ENCODE measurements at regions of chr3 and their contacts with region 1.

Region 1: DNA sequence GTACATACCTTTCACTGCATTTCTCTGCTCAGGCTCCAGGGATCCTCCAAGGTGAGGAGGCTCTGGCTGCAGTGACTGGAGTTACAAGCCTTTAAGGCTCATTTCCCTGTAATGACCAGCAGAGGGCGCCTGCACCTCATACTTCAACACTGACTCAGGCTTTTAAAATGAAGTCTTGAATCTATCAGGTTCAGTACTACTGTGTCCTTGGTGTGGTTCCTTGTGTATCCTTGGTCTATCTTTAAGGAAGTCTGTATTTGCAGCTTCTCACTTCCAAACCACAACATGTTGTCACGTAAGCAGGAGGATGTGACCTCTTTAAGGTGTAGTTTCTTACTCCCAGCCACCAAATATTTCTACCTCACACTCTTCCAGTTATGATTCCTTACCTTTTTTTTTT is 122.5 kb upstream of the ZBED2 start:
- DNase-seq: peak; percentile 84
- ATAC-seq: peak; percentile 94
- H3K4me3 Mint-ChIP-seq: no peak overlapping the region
- H3K27ac Mint-ChIP-seq: no peak overlapping the region
- H3K4me1 Mint-ChIP-seq: no peaks in the 10 kb centered on the region
- H3K27me3 Mint-ChIP-seq: no peaks in the 10 kb centered on the region
- CTCF ChIP-seq: peak; percentile 85

Region 2: GRCh38 chr3:111285694-111286093 is 431.9 kb before region 1 on chr3:
- CTCF ChIA-PET with region 1: no interaction called
- POLR2A ChIA-PET with region 1: no interaction called
- intact Hi-C with region 1: no loop called
- DNase-seq: no peak
- ATAC-seq: no peak
- H3K4me3 Mint-ChIP-seq: no peak overlapping the region
- H3K27ac Mint-ChIP-seq: no peak overlapping the region
- H3K4me1 Mint-ChIP-seq: peaks cover 16% of the 10 kb centered on the region
- H3K27me3 Mint-ChIP-seq: no peaks in the 10 kb centered on the region
- CTCF ChIP-seq: no peak

Region 3: GRCh38 chr3:111668912-111669488 is 48.6 kb before region 1 on chr3:
- CTCF ChIA-PET with region 1: interaction called, 4 read pairs
- POLR2A ChIA-PET with region 1: no interaction called
- intact Hi-C with region 1: loop called (anchors 5 kb)
- DNase-seq: no peak
- ATAC-seq: peak; percentile 50
- H3K4me3 Mint-ChIP-seq: no peak overlapping the region
- H3K27ac Mint-ChIP-seq: peak overlapping the region; percentile 68
- H3K4me1 Mint-ChIP-seq: peaks cover 84% of the 10 kb centered on the region
- H3K27me3 Mint-ChIP-seq: no peaks in the 10 kb centered on the region
- CTCF ChIP-seq: peak; percentile 84

Region 4: DNA sequence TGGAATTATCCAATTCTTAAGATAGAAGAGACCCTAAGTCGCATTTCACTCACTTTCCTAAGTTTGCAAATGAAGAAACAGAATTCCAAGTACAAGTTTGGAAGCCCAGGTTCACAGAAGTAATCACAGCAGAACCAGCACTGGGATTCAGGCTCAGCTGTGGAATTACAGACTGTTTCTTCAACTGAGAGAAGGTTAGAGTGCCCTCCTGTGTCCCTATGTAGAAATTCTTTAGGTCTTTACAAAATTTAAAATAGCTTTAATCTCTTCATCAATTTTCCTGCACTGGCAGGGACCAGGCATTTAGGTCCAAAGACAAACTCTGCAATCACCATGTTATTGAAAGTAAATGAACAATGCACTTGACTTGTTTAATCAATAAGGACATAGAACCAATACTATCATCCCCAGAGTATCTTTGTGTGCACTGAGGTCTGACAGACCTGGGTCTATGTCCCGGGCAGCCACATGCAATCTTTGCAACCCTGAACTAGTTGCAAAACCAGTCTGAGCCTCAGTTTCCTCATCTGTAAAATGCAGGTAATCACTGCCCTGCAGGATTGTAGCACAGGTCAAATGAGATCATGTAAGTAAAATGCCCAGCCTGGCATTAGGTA is 26.2 kb before region 1 on chr3:
- CTCF ChIA-PET with region 1: interaction called, 39 read pairs
- POLR2A ChIA-PET with region 1: no interaction called
- intact Hi-C with region 1: no loop called
- DNase-seq: no peak
- ATAC-seq: no peak
- H3K4me3 Mint-ChIP-seq: no peak overlapping the region
- H3K27ac Mint-ChIP-seq: no peak overlapping the region
- H3K4me1 Mint-ChIP-seq: peaks cover 75% of the 10 kb centered on the region
- H3K27me3 Mint-ChIP-seq: no peaks in the 10 kb centered on the region
- CTCF ChIP-seq: peak; percentile 18

Region 5: DNA sequence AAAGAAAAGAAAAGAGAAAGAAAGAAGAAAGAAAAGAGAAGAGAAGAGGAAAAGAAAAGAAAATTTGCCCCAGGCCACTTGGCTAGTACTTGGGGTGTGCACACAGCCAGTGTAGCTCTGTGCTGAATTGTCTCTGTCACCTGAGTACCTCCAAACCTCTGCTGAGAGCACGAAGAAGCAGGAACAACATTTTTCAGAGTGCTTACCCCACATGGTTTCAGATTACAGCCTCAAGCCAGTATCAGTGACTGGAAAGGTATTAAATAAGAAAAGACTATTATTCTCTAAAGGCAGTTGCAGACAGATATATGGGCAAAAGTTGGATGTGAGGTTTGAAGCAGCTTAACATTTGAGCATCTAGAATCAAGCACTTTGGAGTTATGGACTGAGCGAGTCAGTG is 28.2 kb after region 1 on chr3:
- CTCF ChIA-PET with region 1: interaction called, 11 read pairs
- POLR2A ChIA-PET with region 1: no interaction called
- intact Hi-C with region 1: no loop called
- DNase-seq: no peak
- ATAC-seq: no peak
- H3K4me3 Mint-ChIP-seq: no peak overlapping the region
- H3K27ac Mint-ChIP-seq: no peak overlapping the region
- H3K4me1 Mint-ChIP-seq: no peaks in the 10 kb centered on the region
- H3K27me3 Mint-ChIP-seq: no peaks in the 10 kb centered on the region
- CTCF ChIP-seq: no peak

Region 6: DNA sequence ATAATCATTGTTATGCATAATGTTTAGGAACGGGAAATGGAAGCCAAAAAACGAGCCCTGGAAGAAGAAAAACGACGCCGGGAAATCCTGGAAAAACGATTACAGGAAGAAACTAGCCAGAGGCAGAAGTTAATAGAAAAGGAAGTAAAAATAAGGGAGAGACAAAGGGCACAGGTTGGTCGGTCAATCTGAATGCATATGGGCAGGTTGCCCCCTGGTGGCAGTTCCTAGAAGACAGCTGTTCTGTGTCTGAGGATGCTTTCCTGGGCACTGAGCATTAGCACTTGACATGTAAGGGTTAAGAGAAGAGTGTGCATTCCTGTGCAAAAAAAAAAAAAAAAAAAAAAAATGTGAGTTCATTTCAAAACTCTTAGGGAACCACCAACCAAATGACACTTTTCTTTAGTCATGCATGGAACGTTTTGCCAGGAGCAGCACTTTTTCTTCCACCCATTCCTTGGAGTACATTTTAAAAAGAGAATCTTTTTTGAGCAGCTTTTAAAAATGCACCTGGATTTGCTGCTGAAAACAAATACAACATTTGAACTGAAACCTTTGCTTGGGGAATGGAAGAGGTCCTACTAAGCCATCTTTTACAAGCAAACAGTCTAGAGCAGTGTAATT is 250.2 kb after region 1 on chr3:
- CTCF ChIA-PET with region 1: interaction called, 318 read pairs
- POLR2A ChIA-PET with region 1: no interaction called
- intact Hi-C with region 1: loop called (anchors 1 kb)
- DNase-seq: peak; percentile 94
- ATAC-seq: peak; percentile 96
- H3K4me3 Mint-ChIP-seq: no peak overlapping the region
- H3K27ac Mint-ChIP-seq: peak overlapping the region; percentile 57
- H3K4me1 Mint-ChIP-seq: peaks cover 20% of the 10 kb centered on the region
- H3K27me3 Mint-ChIP-seq: no peaks in the 10 kb centered on the region
- CTCF ChIP-seq: peak; percentile 87

Region 7: GRCh38 chr3:111989061-111989678 is 271.6 kb after region 1 on chr3:
- CTCF ChIA-PET with region 1: interaction called, 12 read pairs
- POLR2A ChIA-PET with region 1: no interaction called
- intact Hi-C with region 1: no loop called
- DNase-seq: no peak
- ATAC-seq: peak; percentile 68
- H3K4me3 Mint-ChIP-seq: no peak overlapping the region
- H3K27ac Mint-ChIP-seq: peak overlapping the region; percentile 28
- H3K4me1 Mint-ChIP-seq: peaks cover 34% of the 10 kb centered on the region
- H3K27me3 Mint-ChIP-seq: no peaks in the 10 kb centered on the region
- CTCF ChIP-seq: peak; percentile 71

Region 8: DNA sequence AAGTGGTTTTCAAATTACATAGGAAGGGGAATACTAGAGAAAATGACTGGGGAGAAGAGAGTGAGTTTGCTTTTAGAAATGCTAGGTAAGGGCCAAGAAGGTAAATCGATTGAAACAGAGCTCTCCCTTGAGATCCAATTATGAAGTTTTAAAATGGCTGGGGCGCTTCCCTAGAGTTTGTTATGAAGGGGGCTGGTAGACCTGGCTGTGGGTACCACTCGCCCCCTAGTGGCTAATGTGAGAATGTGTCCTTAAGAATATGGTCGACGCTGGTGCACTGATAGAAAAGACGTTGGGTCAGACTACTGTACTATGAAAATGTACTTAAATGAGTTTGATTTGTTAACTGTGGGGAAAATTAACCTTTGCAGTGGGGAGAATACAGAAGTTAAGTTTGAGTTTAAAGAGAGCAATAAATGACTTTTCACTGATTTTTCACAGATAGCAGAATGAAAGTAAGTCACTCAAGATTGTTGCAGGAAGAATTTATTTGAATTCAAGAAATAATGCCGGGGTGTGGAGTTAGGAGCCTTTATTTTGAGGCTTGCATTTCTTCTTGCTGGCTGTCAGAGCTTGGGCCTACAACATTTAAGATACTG is 326.1 kb after region 1 on chr3:
- CTCF ChIA-PET with region 1: interaction called, 27 read pairs
- POLR2A ChIA-PET with region 1: no interaction called
- intact Hi-C with region 1: loop called (anchors 5 kb)
- DNase-seq: peak; percentile 70
- ATAC-seq: peak; percentile 99
- H3K4me3 Mint-ChIP-seq: no peak overlapping the region
- H3K27ac Mint-ChIP-seq: no peak overlapping the region
- H3K4me1 Mint-ChIP-seq: peaks cover 2% of the 10 kb centered on the region
- H3K27me3 Mint-ChIP-seq: no peaks in the 10 kb centered on the region
- CTCF ChIP-seq: peak; percentile 89